T-cell (primary cell): ENCODE measurements at regions of chr20 and their contacts with region 1.

Region 1: GRCh38 chr20:32589256-32589655 is 4.1 kb upstream of the NOL4L start:
- DNase-seq: no peak
- ATAC-seq: no peak
- H3K4me3 ChIP-seq: no peak overlapping the region
- H3K4me3 Mint-ChIP-seq: no peak overlapping the region
- H3K27ac ChIP-seq: no peak overlapping the region
- H3K27ac Mint-ChIP-seq: no peak overlapping the region
- H3K4me1 ChIP-seq: peaks cover 3 to 20% of the 10 kb centered on the region in 2 experiments
- H3K4me1 Mint-ChIP-seq: peaks cover 17 to 27% (median 20%) of the 10 kb centered on the region in 3 donors
- H3K27me3 ChIP-seq: peaks cover 0 to 9% of the 10 kb centered on the region in 2 experiments
- H3K27me3 Mint-ChIP-seq: peaks cover 0 to 4% of the 10 kb centered on the region in 2 donors

Region 2: DNA sequence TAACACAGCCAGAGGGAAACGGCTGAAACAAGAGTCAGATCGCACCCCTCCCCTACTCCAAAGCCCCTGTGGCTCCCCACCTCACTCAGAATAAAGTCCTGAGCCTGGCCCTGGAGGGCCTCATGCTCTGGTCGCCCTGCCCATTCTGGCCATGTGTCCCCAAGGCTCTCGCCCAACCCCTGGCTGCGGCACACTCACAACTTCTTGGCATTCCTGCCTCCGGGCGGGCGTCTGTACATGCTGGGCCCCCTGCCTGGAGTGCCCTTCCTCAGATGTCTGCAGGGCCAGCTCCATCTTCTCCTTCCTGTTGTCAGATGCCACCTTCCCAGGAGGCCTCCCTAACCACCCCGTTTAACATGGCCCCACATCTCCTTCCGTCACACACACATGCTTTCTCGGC is 13.0 kb after region 1 on chr20:
- CTCF ChIA-PET with region 1: no interaction called
- POLR2A ChIA-PET with region 1: interaction called in 1 of 2 experiments, 13 read pairs
- DNase-seq: no peak
- ATAC-seq: no peak
- H3K4me3 ChIP-seq: no peak overlapping the region
- H3K4me3 Mint-ChIP-seq: no peak overlapping the region
- H3K27ac ChIP-seq: no peak overlapping the region
- H3K27ac Mint-ChIP-seq: no peak overlapping the region
- H3K4me1 ChIP-seq: no peaks in the 10 kb centered on the region
- H3K4me1 Mint-ChIP-seq: peaks cover 0 to 6% (median 0%) of the 10 kb centered on the region in 3 donors
- H3K27me3 ChIP-seq: peaks cover 0 to 15% of the 10 kb centered on the region in 2 experiments
- H3K27me3 Mint-ChIP-seq: peaks cover 0 to 3% of the 10 kb centered on the region in 2 donors

Region 3: DNA sequence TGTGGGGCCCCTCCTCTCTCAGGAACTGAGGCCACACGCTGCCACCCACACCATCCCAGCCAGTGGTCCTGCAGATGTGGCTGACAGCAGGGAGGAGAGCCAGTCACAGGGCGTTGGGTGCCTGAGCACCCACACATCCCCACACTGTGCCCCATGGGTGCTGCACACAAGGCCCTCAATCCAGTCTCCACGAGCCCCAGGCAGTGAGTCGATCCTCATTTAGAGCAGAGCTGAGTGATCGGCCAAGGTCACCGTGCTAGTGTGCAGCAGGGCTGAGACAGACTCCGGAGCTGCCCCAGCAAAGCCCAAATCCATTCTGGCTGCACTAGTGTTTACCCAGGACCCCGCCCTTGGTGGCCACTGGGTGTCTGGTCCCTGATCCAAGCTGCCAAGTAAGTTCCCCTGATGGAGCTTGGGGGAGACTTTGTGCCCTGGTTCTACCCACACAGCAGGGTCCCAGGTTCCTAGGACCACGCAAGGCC is 75.5 kb after region 1 on chr20:
- CTCF ChIA-PET with region 1: no interaction called
- POLR2A ChIA-PET with region 1: interaction called in 1 of 2 experiments, 11 read pairs
- DNase-seq: no peak
- ATAC-seq: peak in 1 of 4 experiments; percentile 27
- H3K4me3 ChIP-seq: no peak overlapping the region
- H3K4me3 Mint-ChIP-seq: peak overlapping the region in 1 of 3 donors; percentile 40
- H3K27ac ChIP-seq: no peak overlapping the region
- H3K27ac Mint-ChIP-seq: no peak overlapping the region
- H3K4me1 ChIP-seq: peaks cover 0 to 8% of the 10 kb centered on the region in 2 experiments
- H3K4me1 Mint-ChIP-seq: peaks cover 3 to 5% (median 4%) of the 10 kb centered on the region in 3 donors
- H3K27me3 ChIP-seq: peaks cover 0 to 14% of the 10 kb centered on the region in 2 experiments
- H3K27me3 Mint-ChIP-seq: no peaks in the 10 kb centered on the region